Activated B cell treated with CpG ODN at 0.5 μM for 24 hours (primary cell): ENCODE measurements at regions of chr10 and their contacts with region 1.

Region 1: GRCh38 chr10:72331601-72332422 is 22.9 kb downstream of the DNAJB12 start:
- DNase-seq: peak; percentile 81
- ATAC-seq: peak; percentile 82
- H3K4me3 Mint-ChIP-seq: peak overlapping the region; percentile 71
- H3K27ac Mint-ChIP-seq: peak overlapping the region; percentile 94
- H3K4me1 Mint-ChIP-seq: peaks cover 93% of the 10 kb centered on the region
- H3K27me3 Mint-ChIP-seq: no peaks in the 10 kb centered on the region
- CTCF ChIP-seq: no peak

Region 2: GRCh38 chr10:71835671-71836595 is 495.9 kb before region 1 on chr10:
- CTCF ChIA-PET with region 1: no interaction called
- POLR2A ChIA-PET with region 1: interaction called, 5 read pairs
- intact Hi-C with region 1: loop called (anchors 5 kb)
- DNase-seq: peak; percentile 84
- ATAC-seq: peak; percentile 92
- H3K4me3 Mint-ChIP-seq: peak overlapping the region; percentile 79
- H3K27ac Mint-ChIP-seq: peak overlapping the region; percentile 95
- H3K4me1 Mint-ChIP-seq: peaks cover 88% of the 10 kb centered on the region
- H3K27me3 Mint-ChIP-seq: no peaks in the 10 kb centered on the region
- CTCF ChIP-seq: no peak

Region 3: GRCh38 chr10:72126184-72126871 is 205.5 kb before region 1 on chr10:
- CTCF ChIA-PET with region 1: interaction called, 172 read pairs
- POLR2A ChIA-PET with region 1: interaction called, 9 read pairs
- intact Hi-C with region 1: loop called (anchors 1 kb)
- DNase-seq: no peak
- ATAC-seq: no peak
- H3K4me3 Mint-ChIP-seq: no peak overlapping the region
- H3K27ac Mint-ChIP-seq: peak overlapping the region; percentile 42
- H3K4me1 Mint-ChIP-seq: peaks cover 2% of the 10 kb centered on the region
- H3K27me3 Mint-ChIP-seq: no peaks in the 10 kb centered on the region
- CTCF ChIP-seq: no peak

Region 4: GRCh38 chr10:72260588-72261322 is 71.1 kb before region 1 on chr10:
- CTCF ChIA-PET with region 1: interaction called, 21 read pairs
- POLR2A ChIA-PET with region 1: interaction called, 94 read pairs
- intact Hi-C with region 1: loop called (anchors 1 kb)
- DNase-seq: peak; percentile 70
- ATAC-seq: peak; percentile 71
- H3K4me3 Mint-ChIP-seq: peak overlapping the region; percentile 91
- H3K27ac Mint-ChIP-seq: peak overlapping the region; percentile 96
- H3K4me1 Mint-ChIP-seq: peaks cover 58% of the 10 kb centered on the region
- H3K27me3 Mint-ChIP-seq: no peaks in the 10 kb centered on the region
- CTCF ChIP-seq: no peak

Region 5: DNA sequence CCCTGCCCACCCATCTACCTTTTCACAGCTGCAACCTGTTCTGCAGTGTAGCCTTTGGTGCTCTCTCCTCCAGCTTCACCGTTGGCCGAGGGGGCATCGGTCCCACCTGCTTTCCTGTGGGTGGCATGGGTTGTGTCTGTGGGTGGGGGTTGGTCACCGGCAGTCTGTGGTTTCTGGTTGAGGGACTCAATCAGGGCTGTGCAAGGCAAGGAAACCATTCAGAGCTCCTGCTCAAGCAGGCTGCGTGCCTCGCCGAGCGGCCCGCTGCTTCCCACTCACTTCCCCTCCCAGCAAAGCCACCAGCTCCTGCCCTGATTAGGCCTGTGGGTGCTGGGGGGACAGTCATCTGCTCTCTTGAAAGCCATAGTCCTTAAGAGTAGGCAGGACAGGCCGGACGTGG is 13.1 kb after region 1 on chr10:
- CTCF ChIA-PET with region 1: interaction called, 5 read pairs
- POLR2A ChIA-PET with region 1: interaction called, 12 read pairs
- intact Hi-C with region 1: no loop called
- DNase-seq: no peak
- ATAC-seq: no peak
- H3K4me3 Mint-ChIP-seq: no peak overlapping the region
- H3K27ac Mint-ChIP-seq: no peak overlapping the region
- H3K4me1 Mint-ChIP-seq: peaks cover 19% of the 10 kb centered on the region
- H3K27me3 Mint-ChIP-seq: no peaks in the 10 kb centered on the region
- CTCF ChIP-seq: no peak

Region 6: GRCh38 chr10:72483471-72483870 is 151.7 kb after region 1 on chr10:
- CTCF ChIA-PET with region 1: no interaction called
- POLR2A ChIA-PET with region 1: no interaction called
- intact Hi-C with region 1: no loop called
- DNase-seq: no peak
- ATAC-seq: no peak
- H3K4me3 Mint-ChIP-seq: no peak overlapping the region
- H3K27ac Mint-ChIP-seq: no peak overlapping the region
- H3K4me1 Mint-ChIP-seq: no peaks in the 10 kb centered on the region
- H3K27me3 Mint-ChIP-seq: no peaks in the 10 kb centered on the region
- CTCF ChIP-seq: no peak